Prostate gland (tissue), 2 donors: ENCODE measurements at regions of chr2 and their contacts with region 1.

Region 1: GRCh38 chr2:148209603-148210002 is 188.7 kb downstream of the MBD5 start:
- DNase-seq: no peak
- H3K4me3 ChIP-seq: no peak overlapping the region
- H3K27ac ChIP-seq: no peak overlapping the region
- H3K4me1 ChIP-seq: no peaks in the 10 kb centered on the region
- H3K27me3 ChIP-seq: no peaks in the 10 kb centered on the region
- CTCF ChIP-seq: no peak
- POLR2A ChIP-seq: no peak

Region 2: GRCh38 chr2:146642066-146642465 is 1567.5 kb before region 1 on chr2:
- intact Hi-C with region 1: no loop called
- DNase-seq: peak; percentile 4
- H3K4me3 ChIP-seq: no peak overlapping the region
- H3K27ac ChIP-seq: no peak overlapping the region
- H3K4me1 ChIP-seq: no peaks in the 10 kb centered on the region
- H3K27me3 ChIP-seq: no peaks in the 10 kb centered on the region
- CTCF ChIP-seq: no peak
- POLR2A ChIP-seq: no peak

Region 3: GRCh38 chr2:148509288-148509902 is 299.8 kb after region 1 on chr2:
- intact Hi-C with region 1: loop called (anchors 10 kb)
- DNase-seq: peak; percentile 64
- H3K4me3 ChIP-seq: peak overlapping the region in 1 of 2 donors; percentile 9
- H3K27ac ChIP-seq: no peak overlapping the region
- H3K4me1 ChIP-seq: no peaks in the 10 kb centered on the region
- H3K27me3 ChIP-seq: no peaks in the 10 kb centered on the region
- CTCF ChIP-seq: peak; percentile 31 to 79 (median 68)
- POLR2A ChIP-seq: no peak

Region 4: GRCh38 chr2:148644883-148645538 is 435.4 kb after region 1 on chr2:
- intact Hi-C with region 1: no loop called
- DNase-seq: peak; percentile 92
- H3K4me3 ChIP-seq: peak overlapping the region; percentile 68 to 92
- H3K27ac ChIP-seq: peak overlapping the region; percentile 99 to 100
- H3K4me1 ChIP-seq: peaks cover 4% of the 10 kb centered on the region
- H3K27me3 ChIP-seq: no peaks in the 10 kb centered on the region
- CTCF ChIP-seq: peak in 2 of 4 experiments; percentile 60 to 64
- POLR2A ChIP-seq: no peak